Panc1 (cell line): ENCODE measurements at regions of chr6 and their contacts with region 1.

Region 1: DNA sequence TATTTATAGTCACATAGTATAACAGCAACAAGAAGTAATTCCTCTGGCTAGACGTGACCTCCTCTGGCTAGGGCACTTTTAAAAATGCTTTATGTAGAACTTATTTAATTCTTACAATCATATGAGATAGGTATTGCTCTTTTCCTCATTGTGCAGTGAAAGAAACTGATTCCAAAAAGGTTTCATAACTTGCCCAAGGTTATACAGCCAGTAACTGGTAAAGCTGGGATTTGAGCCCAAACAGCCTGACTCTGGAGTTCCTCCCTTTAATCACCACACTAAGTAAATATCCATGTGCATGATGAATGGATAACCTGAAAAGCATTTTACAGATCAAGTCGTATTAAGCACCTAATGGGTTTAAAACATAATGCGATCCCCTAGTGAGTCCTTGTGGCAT is 214.6 kb downstream of the PRL start:
- DNase-seq: no peak
- ATAC-seq: no peak
- H3K4me3 ChIP-seq: no peak overlapping the region
- H3K27ac ChIP-seq: peak overlapping the region; percentile 23; the same call in 1 of the 2 replicates
- H3K4me1 ChIP-seq: peaks cover 3% of the 10 kb centered on the region; the same call in 1 of the 2 replicates
- H3K27me3 ChIP-seq: no peaks in the 10 kb centered on the region
- CTCF ChIP-seq: no peak

Region 2: GRCh38 chr6:22789315-22789714 is 707.1 kb after region 1 on chr6:
- CTCF ChIA-PET with region 1: interaction called, 10 read pairs
- POLR2A ChIA-PET with region 1: no interaction called
- in situ Hi-C with region 1: no loop called
- intact Hi-C with region 1: no loop called
- DNase-seq: no peak
- ATAC-seq: no peak
- H3K4me3 ChIP-seq: no peak overlapping the region
- H3K27ac ChIP-seq: no peak overlapping the region
- H3K4me1 ChIP-seq: no peaks in the 10 kb centered on the region
- H3K27me3 ChIP-seq: no peaks in the 10 kb centered on the region
- CTCF ChIP-seq: no peak